ENCODE measurements at regions of chr19 and their contacts with region 1.

Region 1: DNA sequence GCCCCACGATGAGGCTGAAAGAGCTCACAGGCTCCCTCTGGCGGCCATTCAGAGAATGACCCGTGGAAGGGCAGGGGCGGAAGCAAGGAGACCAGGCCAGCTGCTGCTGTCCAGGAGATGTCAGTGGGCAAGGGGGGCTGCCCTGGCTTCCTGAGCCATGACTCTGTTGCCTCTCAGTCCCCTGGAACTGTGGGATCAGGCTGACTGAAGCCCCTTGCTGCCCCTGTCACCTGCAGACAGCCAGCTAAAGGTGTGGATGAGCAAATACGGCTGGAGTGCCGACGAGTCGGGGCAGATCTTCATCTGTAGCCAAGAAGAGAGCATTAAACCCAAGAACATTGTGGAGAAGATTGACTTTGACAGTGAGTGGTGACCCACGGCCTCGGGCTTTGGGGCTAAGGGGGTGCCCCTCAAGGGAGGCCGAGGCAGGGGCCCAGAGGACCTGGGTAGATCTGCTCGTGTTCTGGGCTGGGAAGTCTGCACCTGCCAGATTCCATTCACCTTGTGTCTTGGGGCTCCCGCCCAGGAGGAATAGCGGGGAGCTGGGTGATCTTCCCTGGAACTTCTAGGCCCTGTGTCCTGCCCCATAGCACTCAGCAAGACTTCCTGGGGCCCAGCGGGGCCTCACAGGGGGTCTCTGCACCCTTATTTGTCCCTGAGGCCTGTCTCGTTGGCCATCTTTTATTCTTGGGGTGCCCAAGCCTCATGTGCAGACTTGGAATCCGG is 12.5 kb upstream of the ACTN4 start:
- DNase-seq: peak; percentile 62 to 80 (median 62)
- H3K4me3 ChIP-seq: no peak overlapping the region
- H3K4me3 Mint-ChIP-seq: peak overlapping the region in 6 of 7 donors; percentile 15 to 71 (median 58)
- H3K27ac ChIP-seq: no peak overlapping the region
- H3K27ac Mint-ChIP-seq: peak overlapping the region; percentile 2 to 93 (median 88)
- H3K4me1 ChIP-seq: peaks cover 30% of the 10 kb centered on the region
- H3K4me1 Mint-ChIP-seq: peaks cover 31 to 33% (median 33%) of the 10 kb centered on the region in 3 donors
- H3K27me3 ChIP-seq: no peaks in the 10 kb centered on the region
- H3K27me3 Mint-ChIP-seq: no peaks in the 10 kb centered on the region

Region 2: GRCh38 chr19:38514812-38515633 is 119.9 kb before region 1 on chr19:
- CTCF ChIA-PET with region 1: interaction called, 79 read pairs
- POLR2A ChIA-PET with region 1: interaction called, 3 read pairs
- DNase-seq: peak; percentile 61 to 83 (median 68)
- H3K4me3 ChIP-seq: no peak overlapping the region
- H3K4me3 Mint-ChIP-seq: peak overlapping the region in 2 of 7 donors; percentile 15 to 29
- H3K27ac ChIP-seq: no peak overlapping the region
- H3K27ac Mint-ChIP-seq: peak overlapping the region in 4 of 8 donors; percentile 0 to 25 (median 16)
- H3K4me1 ChIP-seq: peaks cover 5% of the 10 kb centered on the region
- H3K4me1 Mint-ChIP-seq: peaks cover 8 to 20% (median 18%) of the 10 kb centered on the region in 3 donors
- H3K27me3 ChIP-seq: no peaks in the 10 kb centered on the region
- H3K27me3 Mint-ChIP-seq: peaks cover 0 to 3% of the 10 kb centered on the region in 2 donors

Region 3: GRCh38 chr19:38557205-38557799 is 77.6 kb before region 1 on chr19:
- CTCF ChIA-PET with region 1: interaction called, 12 read pairs
- POLR2A ChIA-PET with region 1: no interaction called
- DNase-seq: peak in 4 of 5 donors; percentile 23 to 79 (median 37)
- H3K4me3 ChIP-seq: no peak overlapping the region
- H3K4me3 Mint-ChIP-seq: peak overlapping the region; percentile 2 to 86 (median 72)
- H3K27ac ChIP-seq: peak overlapping the region; percentile 43
- H3K27ac Mint-ChIP-seq: peak overlapping the region; percentile 2 to 90 (median 62)
- H3K4me1 ChIP-seq: peaks cover 38% of the 10 kb centered on the region
- H3K4me1 Mint-ChIP-seq: peaks cover 52 to 76% (median 71%) of the 10 kb centered on the region in 3 donors
- H3K27me3 ChIP-seq: no peaks in the 10 kb centered on the region
- H3K27me3 Mint-ChIP-seq: no peaks in the 10 kb centered on the region

Region 4: DNA sequence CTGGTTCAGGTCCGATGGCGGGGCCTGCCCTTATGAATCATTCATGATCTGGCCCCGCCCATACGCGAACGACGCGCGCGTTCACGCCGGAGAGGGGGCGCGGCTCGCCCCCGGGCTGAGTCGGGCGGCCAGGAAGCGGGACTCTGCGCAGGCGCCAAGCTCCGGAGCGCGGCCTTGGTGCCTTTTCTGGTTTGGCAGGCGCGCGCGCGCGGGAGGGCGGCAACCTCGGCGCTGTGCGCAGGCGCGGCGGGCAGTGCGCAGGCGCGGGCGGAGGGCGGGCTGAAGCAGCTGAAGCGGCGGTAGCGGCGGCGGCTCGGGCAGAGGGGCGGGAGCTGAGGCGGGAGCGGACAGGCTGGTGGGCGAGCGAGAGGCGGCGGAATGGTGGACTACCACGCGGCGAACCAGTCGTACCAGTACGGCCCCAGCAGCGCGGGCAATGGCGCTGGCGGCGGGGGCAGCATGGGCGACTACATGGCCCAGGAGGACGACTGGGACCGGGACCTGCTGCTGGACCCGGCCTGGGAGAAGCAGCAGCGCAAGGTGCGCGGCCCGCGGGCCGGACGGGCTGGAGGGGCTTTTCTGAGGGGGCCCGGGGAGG is 12.5 kb after region 1 on chr19 and contains the start of gene ACTN4:
- CTCF ChIA-PET with region 1: interaction called, 18 read pairs
- POLR2A ChIA-PET with region 1: interaction called, 5 read pairs
- DNase-seq: peak; percentile 100
- H3K4me3 ChIP-seq: peak within 1 kb of the TSS; percentile 71
- H3K4me3 Mint-ChIP-seq: peak within 1 kb of the TSS; percentile 90 to 98 (median 94)
- H3K27ac ChIP-seq: peak within 1 kb of the TSS; percentile 84
- H3K27ac Mint-ChIP-seq: peak within 1 kb of the TSS; percentile 75 to 99 (median 90)
- H3K4me1 ChIP-seq: peaks cover 30% of the 10 kb centered on the region
- H3K4me1 Mint-ChIP-seq: peaks cover 39 to 49% (median 48%) of the 10 kb centered on the region in 3 donors
- H3K27me3 ChIP-seq: no peaks in the 10 kb centered on the region
- H3K27me3 Mint-ChIP-seq: no peaks in the 10 kb centered on the region
- total RNA-seq, gene ACTN4: 295 to 314 TPM